Activated CD4-positive, alpha-beta T cell treated with anti-CD3 and anti-CD28 coated beads, Interleukin-2, amount 10 ng/mL, durations not matched to agents 24 days and 14 days (primary cell): ENCODE measurements at regions of chr12 and their contacts with region 1.

Region 1: DNA sequence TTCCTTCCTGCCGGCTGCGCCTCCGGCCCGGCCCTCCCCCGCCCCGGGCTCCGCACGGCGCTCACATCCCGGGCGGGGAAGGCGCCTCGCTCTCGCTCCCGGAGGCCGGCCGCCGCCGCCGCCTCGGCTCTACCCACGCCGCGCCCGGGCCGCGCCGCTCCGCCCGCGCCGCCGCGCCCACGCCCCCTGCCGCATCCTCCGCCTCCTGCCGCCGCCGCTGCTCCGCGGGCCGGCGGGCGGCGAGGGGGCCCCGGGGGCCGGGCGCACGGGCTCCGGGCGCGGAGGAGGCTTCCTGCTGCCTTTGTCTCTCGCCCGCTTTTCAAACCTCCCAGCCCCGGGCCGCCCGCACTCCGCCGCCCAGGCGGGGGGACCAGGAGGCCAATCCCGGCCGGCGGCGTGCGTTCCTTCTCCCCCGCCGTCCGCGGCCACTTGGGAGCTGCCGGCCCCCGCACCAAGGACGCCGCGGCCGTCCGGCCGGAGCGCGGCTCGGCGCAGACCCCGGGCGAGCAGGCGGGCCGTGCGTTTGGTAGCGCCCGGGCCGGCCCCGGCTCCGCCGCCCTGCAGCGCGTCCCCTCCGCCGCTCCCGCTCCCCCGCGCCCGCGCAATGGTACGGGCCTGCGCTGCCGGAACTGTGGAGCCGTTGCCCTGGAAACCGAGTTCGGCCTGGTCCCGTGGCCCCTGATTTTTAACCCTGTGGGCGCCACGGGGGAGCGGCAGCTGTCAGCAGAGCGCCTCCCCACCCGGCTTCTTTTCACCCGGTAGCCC is at the start of gene FBXL14:
- DNase-seq: peak; percentile 97
- H3K4me3 Mint-ChIP-seq: peak within 1 kb of the TSS; percentile 99
- H3K27ac Mint-ChIP-seq: peak within 1 kb of the TSS; percentile 96
- H3K4me1 Mint-ChIP-seq: peaks cover 40% of the 10 kb centered on the region
- H3K27me3 Mint-ChIP-seq: no peaks in the 10 kb centered on the region
- total RNA-seq, gene FBXL14: 17.4 and 18.8 TPM in 2 replicates

Region 2: DNA sequence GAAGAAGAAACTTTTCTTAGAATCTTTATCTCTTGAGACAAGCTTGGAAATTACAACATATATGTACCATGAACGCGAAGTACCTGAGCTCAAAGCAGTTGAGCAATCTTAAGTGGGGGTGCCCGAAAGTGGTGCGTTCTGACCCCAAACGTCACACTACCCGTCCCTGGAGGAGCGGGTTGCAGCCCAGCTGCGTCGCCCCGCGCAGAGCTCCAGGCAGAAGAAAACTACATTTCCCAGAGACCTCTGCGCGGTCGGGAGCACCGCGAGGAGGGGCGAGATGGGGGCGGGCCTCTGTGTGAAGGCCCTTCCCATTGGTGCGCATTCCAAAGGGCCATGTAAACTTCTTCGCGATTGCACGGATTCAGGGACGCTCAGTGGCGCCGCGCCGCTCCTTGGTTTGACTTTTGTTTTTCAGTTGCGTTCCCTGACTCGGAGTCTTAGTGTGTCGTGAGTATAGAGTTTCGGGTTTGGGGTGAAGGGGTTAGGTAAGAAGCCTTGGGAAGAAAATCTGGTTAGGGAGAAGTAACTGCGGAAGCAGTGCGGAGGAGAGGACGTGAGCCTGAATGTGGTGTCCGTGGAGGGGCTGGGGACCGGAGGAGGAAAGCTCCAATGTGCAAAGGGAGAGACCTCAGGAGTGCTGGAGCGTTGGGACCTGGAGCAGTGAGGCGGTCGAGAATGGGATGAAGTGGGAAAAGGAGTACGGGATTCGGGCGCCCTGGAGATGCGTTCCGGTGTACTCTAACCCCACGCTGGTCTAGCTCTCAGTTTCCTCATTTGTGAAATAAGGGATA is 1193.0 kb before region 1 on chr12 and contains the start of gene CCDC77:
- intact Hi-C with region 1: loop called (anchors 2 kb)
- DNase-seq: peak; percentile 99
- H3K4me3 Mint-ChIP-seq: no peak within 1 kb of the TSS
- H3K27ac Mint-ChIP-seq: no peak within 1 kb of the TSS
- H3K4me1 Mint-ChIP-seq: no peaks in the 10 kb centered on the region
- H3K27me3 Mint-ChIP-seq: no peaks in the 10 kb centered on the region
- total RNA-seq, gene CCDC77: 12.2 and 13.0 TPM in 2 replicates

Region 3: DNA sequence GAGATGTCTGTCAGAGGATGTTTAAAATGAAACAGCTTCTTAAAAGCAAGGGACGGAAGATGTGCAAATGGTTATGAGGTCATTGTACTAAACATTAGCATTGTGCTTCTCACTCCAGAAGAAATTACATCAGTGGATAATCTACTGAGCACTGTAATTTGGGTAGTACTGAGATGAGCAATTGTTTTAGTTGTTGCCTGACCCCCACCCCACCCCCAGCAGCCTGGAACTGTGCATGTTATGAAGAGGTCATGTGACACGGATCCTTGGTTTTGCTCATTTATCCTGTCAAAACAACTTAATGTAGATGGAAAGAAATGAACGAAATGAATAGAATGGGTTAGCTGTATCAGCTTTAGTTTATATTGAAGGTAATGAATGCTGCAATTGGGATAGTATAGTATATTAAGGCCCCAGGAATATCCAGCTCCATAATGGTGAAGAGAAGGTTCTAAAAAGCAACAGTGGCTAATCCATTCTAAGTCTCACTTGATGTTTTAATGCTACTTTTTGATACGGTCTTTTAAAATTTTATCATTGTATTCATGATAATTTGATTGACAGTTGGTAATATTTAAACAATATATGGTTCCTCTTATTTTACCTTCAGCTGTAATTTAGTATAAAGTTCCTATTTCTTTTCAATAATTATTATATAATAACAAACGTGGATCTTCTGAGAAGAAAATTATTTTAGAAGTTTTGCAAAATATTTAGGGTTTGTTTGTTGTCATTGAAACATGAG is 783.6 kb before region 1 on chr12:
- intact Hi-C with region 1: loop called (anchors 10 kb)
- DNase-seq: peak; percentile 74
- H3K4me3 Mint-ChIP-seq: no peak overlapping the region
- H3K27ac Mint-ChIP-seq: peak overlapping the region; percentile 57
- H3K4me1 Mint-ChIP-seq: peaks cover 41% of the 10 kb centered on the region
- H3K27me3 Mint-ChIP-seq: no peaks in the 10 kb centered on the region

Region 4: DNA sequence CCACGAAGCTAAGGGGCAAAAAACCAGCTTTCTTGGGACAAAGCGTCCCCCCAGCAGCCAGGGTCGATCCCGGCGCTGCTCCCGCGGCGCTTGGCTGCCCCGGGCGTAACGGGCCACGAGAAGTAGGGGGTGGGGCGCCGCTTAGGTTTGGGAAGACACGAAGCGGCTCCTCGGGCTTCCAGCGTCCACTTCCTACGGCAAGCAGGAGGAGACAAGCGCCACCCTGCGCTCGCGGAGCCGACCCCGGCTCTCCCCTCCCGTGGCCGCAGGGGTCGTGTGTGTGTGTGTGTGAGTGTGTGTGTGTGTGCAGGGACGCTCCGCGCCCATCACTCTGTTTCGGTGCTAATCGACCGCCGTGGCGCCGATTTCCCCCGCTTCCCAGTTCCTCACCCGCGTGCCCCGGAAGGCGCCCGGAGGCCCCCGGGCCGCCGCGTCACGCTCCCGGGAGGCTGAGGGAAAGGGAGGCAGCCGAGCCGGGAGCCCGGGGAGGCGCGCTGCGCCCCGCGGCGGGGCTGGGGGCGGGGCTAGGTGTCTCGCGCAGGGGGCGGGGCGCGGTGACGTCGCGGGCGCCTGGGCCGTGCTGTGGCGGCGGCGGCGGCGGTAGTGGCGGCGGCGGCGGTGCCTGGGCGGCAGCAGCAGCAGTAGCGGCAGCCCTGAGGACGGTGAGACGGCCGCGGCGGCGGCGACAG is 603.6 kb before region 1 on chr12 and contains the start of gene ERC1:
- intact Hi-C with region 1: loop called (anchors 5 kb)
- DNase-seq: peak; percentile 96
- H3K4me3 Mint-ChIP-seq: peak within 1 kb of the TSS; percentile 100
- H3K27ac Mint-ChIP-seq: peak within 1 kb of the TSS; percentile 99
- H3K4me1 Mint-ChIP-seq: peaks cover 36% of the 10 kb centered on the region
- H3K27me3 Mint-ChIP-seq: peaks cover 2% of the 10 kb centered on the region
- total RNA-seq, gene ERC1: 30.8 and 31.6 TPM in 2 replicates

Region 5: GRCh38 chr12:1690578-1691122 is 96.2 kb after region 1 on chr12 and contains the start of gene ADIPOR2:
- intact Hi-C with region 1: loop called (anchors 2 kb)
- DNase-seq: peak; percentile 98
- H3K4me3 Mint-ChIP-seq: peak within 1 kb of the TSS; percentile 88
- H3K27ac Mint-ChIP-seq: peak within 1 kb of the TSS; percentile 99
- H3K4me1 Mint-ChIP-seq: peaks cover 28% of the 10 kb centered on the region
- H3K27me3 Mint-ChIP-seq: peaks cover 8% of the 10 kb centered on the region
- total RNA-seq, gene ADIPOR2: 68.7 and 71.2 TPM in 2 replicates